ENCODE measurements at regions of chr3 and their contacts with region 1.

Region 1: GRCh38 chr3:65559643-65560042 is 479.1 kb downstream of the MAGI1 start:
- DNase-seq: no peak

Region 2: DNA sequence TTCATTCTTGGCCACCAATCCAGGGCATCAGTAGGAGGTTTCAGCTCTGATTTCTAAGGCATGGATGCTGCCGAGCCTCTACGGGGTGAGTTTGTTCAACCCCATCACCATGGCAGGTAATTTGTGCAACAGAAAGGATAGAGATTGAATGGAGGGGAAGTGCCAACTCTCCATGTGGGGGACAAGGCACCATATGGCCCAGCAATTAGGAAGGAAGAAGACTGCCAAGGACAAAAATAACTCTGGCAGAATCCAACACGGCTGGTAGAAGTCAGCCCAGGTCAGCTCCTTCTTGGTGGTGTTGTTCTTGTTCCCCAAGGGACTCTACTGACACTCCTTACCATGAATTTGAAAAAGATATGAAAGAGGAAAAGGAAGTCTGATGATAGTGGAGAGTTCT is 24.8 kb before region 1 on chr3:
- intact Hi-C with region 1: loop called in 1 of 2 experiments (anchors 1 kb)
- DNase-seq: no peak